ENCODE measurements at regions of chr1 and their contacts with region 1.

Region 1: GRCh38 chr1:92273039-92273438 is 25.7 kb downstream of the GLMN start:
- DNase-seq: no peak
- ATAC-seq: no peak
- H3K4me3 ChIP-seq: no peak overlapping the region
- H3K4me3 Mint-ChIP-seq: no peak overlapping the region
- H3K27ac ChIP-seq: no peak overlapping the region
- H3K27ac Mint-ChIP-seq: no peak overlapping the region
- H3K4me1 ChIP-seq: no peaks in the 10 kb centered on the region
- H3K4me1 Mint-ChIP-seq: peaks cover 2 to 7% (median 6%) of the 10 kb centered on the region in 3 donors
- H3K27me3 ChIP-seq: no peaks in the 10 kb centered on the region
- H3K27me3 Mint-ChIP-seq: no peaks in the 10 kb centered on the region

Region 2: GRCh38 chr1:92118826-92119225 is 154.2 kb before region 1 on chr1:
- CTCF ChIA-PET with region 1: no interaction called
- POLR2A ChIA-PET with region 1: interaction called in 1 of 2 experiments, 12 read pairs
- DNase-seq: no peak
- ATAC-seq: no peak
- H3K4me3 ChIP-seq: no peak overlapping the region
- H3K4me3 Mint-ChIP-seq: no peak overlapping the region
- H3K27ac ChIP-seq: no peak overlapping the region
- H3K27ac Mint-ChIP-seq: no peak overlapping the region
- H3K4me1 ChIP-seq: peaks cover 0 to 5% of the 10 kb centered on the region in 2 experiments
- H3K4me1 Mint-ChIP-seq: peaks cover 14 to 21% (median 14%) of the 10 kb centered on the region in 3 donors
- H3K27me3 ChIP-seq: no peaks in the 10 kb centered on the region
- H3K27me3 Mint-ChIP-seq: no peaks in the 10 kb centered on the region